CD4-positive, alpha-beta T cell (primary cell): ENCODE measurements at regions of chr17 and their contacts with region 1.

Region 1: DNA sequence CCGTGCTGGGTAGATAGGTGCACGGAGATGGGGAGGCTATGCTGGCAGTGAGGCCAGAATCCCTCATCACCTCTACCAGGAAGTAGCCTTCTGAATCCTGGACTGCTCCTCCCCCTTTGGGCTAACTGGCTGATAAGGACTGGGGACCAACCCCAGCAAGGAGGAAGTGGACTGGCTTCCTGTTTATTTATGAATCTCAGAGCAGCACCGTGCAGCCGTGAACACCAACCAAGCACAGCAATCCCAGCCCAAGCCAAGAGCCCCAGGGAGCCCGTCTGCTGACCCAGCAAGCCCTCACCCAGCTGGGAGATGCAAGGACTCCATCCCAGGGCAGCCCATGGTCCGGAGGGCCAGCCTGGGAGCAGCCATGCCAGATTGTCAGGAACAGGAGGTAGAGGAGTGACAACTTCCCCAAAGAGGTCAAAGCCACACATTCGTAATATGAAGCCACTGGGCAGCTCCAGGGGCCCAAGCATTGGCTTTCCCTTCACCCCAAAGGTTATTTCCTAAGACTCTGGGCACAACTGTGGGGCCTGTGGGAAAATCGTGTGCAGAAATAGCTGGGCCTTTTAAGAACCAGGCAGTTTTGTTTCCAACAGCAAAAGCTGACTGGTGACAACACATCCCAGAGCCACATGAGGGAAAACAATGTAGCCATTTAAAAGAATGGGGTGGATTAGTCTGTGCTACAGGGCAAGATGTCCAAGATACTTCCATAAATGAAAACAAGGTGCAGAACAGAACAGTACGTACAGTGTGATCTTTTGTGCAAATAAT is 23.9 kb downstream of the PHB1 start:
- DNase-seq: peak in 5 of 14 experiments; percentile 9 to 56 (median 46)
- ATAC-seq: no peak
- H3K4me3 ChIP-seq: peak overlapping the region; percentile 24
- H3K4me3 Mint-ChIP-seq: no peak overlapping the region
- H3K27ac ChIP-seq: peak overlapping the region in 1 of 2 donors; percentile 70
- H3K27ac Mint-ChIP-seq: peak overlapping the region; percentile 64
- H3K4me1 ChIP-seq: peaks cover 70% of the 10 kb centered on the region
- H3K4me1 Mint-ChIP-seq: peaks cover 61% of the 10 kb centered on the region
- H3K27me3 ChIP-seq: no peaks in the 10 kb centered on the region
- H3K27me3 Mint-ChIP-seq: no peaks in the 10 kb centered on the region
- CTCF ChIP-seq: no peak

Region 2: DNA sequence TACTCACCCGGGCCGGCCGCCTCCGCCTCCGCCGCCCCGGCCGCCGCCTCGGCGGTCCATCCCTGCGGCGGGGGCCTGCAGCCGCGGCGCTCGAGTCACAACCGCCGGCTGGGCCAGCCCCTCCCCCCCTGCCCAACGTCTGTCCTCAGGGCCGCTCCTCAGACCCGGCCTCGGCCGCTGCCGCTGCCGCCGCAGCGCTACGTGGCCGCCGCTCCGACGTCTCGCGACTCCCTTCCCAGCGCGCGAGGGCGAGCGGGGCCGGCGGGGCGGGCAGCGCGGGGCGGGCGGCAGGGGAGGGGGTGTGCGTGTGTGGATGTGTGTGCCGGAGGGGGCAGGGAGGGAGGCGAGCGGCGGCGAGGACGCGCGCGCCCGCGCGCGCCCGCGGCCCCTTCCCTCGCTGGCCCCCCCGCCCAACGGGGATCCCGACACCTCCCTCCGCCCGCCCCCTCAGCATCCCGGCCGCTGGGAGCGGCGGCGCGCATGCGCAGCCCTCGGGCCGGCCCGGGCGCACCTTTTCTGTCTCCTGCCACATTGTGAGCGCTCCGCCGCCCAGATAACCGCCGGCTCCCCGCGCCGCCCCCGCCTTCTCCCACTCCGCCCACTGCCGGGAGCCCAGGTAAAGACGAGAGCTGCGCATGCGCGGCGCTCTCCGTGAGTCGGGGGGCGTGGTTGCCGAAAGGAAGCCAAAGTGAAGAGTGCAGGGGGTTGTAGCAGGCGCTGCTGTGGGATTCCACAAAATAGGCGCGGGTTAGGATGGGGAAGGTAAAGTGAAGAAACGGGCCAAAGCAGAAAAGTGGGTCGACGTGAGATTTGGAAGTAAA is 28.6 kb before region 1 on chr17 and contains the start of gene ZNF652:
- CTCF ChIA-PET with region 1: no interaction called
- POLR2A ChIA-PET with region 1: interaction called, 10 read pairs
- intact Hi-C with region 1: loop called in 1 of 2 experiments (anchors 2 kb)
- DNase-seq: peak; percentile 94 to 98 (median 97)
- ATAC-seq: peak; percentile 59
- H3K4me3 ChIP-seq: peak within 1 kb of the TSS; percentile 86
- H3K4me3 Mint-ChIP-seq: peak within 1 kb of the TSS; percentile 96
- H3K27ac ChIP-seq: peak within 1 kb of the TSS; percentile 61 to 87
- H3K27ac Mint-ChIP-seq: peak within 1 kb of the TSS; percentile 97
- H3K4me1 ChIP-seq: peaks cover 38% of the 10 kb centered on the region
- H3K4me1 Mint-ChIP-seq: peaks cover 56% of the 10 kb centered on the region
- H3K27me3 ChIP-seq: no peaks in the 10 kb centered on the region
- H3K27me3 Mint-ChIP-seq: no peaks in the 10 kb centered on the region
- CTCF ChIP-seq: no peak
- total RNA-seq, gene ZNF652: 33.7 to 34.9 TPM

Region 3: DNA sequence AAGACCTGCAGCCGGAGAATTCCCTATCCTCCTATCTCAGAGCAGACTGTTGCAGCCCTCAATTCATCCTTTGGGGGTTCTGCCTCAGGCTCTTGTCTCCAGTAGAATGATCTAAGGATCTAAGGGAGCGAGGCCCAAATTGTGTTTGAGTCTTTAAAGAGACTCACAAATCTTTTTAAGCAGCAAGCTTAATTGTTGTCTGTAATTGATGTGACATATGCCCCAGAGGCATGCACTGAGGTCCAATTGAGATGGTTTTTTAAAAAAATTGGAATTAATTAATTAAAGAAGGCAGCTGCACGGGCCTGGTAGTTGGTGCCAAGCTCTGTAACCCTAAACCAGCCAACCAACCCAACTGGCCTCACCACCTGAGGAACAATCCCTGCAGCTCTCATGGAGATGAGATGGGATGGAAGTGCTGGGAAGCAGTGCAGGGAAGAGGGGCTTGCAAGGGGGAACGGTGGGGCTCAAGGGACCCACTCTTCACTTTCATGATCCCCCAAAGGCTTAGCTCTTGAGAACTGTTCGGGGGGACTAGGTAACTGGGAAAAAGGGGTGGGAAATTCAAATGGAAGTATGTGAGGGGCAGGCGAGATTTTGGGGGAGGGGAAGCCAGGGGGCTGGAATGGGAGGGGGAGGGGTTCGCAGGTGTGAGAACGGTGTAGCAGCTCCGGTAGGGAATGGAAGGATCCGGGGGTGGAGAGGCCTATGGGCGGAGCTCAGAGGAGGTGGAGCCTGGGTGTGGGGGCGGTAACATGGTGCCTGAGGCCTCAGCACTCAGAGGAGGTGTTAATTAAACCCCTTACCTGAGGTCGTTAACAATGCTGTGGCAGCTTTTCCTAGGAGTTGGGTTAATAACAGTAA is 19.5 kb before region 1 on chr17:
- CTCF ChIA-PET with region 1: interaction called, 8 read pairs
- POLR2A ChIA-PET with region 1: interaction called, 6 read pairs
- intact Hi-C with region 1: loop called in 1 of 2 experiments (anchors 2 kb)
- DNase-seq: no peak
- ATAC-seq: no peak
- H3K4me3 ChIP-seq: no peak overlapping the region
- H3K4me3 Mint-ChIP-seq: no peak overlapping the region
- H3K27ac ChIP-seq: no peak overlapping the region
- H3K27ac Mint-ChIP-seq: no peak overlapping the region
- H3K4me1 ChIP-seq: peaks cover 6% of the 10 kb centered on the region
- H3K4me1 Mint-ChIP-seq: peaks cover 4% of the 10 kb centered on the region
- H3K27me3 ChIP-seq: no peaks in the 10 kb centered on the region
- H3K27me3 Mint-ChIP-seq: no peaks in the 10 kb centered on the region
- CTCF ChIP-seq: no peak